Heart right ventricle (tissue), 16 donors: ENCODE measurements at regions of chr22 and their contacts with region 1.

Region 1: GRCh38 chr22:17830043-17830961 is 56.0 kb upstream of the BID start:
- DNase-seq: peak; percentile 83 to 85
- ATAC-seq: peak; percentile 62 to 88 (median 80)
- H3K4me3 ChIP-seq: peak overlapping the region in 1 of 10 donors; percentile 4
- H3K27ac ChIP-seq: peak overlapping the region in 8 of 10 donors; percentile 54 to 81 (median 72)
- H3K4me1 ChIP-seq: peaks cover 18 to 53% (median 41%) of the 10 kb centered on the region in 9 donors
- H3K27me3 ChIP-seq: no peaks in the 10 kb centered on the region
- CTCF ChIP-seq: peak; percentile 97 to 100 (median 100)

Region 2: GRCh38 chr22:17872471-17872870 is 42.2 kb after region 1 on chr22:
- intact Hi-C with region 1: loop called in 1 of 10 experiments (anchors 5 kb)
- DNase-seq: no peak
- ATAC-seq: no peak
- H3K4me3 ChIP-seq: no peak overlapping the region
- H3K27ac ChIP-seq: peak overlapping the region in 7 of 10 donors; percentile 11 to 73 (median 36)
- H3K4me1 ChIP-seq: peaks cover 2 to 45% (median 15%) of the 10 kb centered on the region in 9 donors
- H3K27me3 ChIP-seq: no peaks in the 10 kb centered on the region
- CTCF ChIP-seq: no peak

Region 3: GRCh38 chr22:18031695-18032454 is 201.6 kb after region 1 on chr22:
- intact Hi-C with region 1: loop called in 3 of 10 experiments (anchors 5 to 10 kb)
- DNase-seq: no peak
- ATAC-seq: peak in 7 of 8 donors; percentile 16 to 77 (median 48)
- H3K4me3 ChIP-seq: no peak overlapping the region
- H3K27ac ChIP-seq: peak overlapping the region in 4 of 10 donors; percentile 32 to 71 (median 52)
- H3K4me1 ChIP-seq: peaks cover 0 to 44% (median 20%) of the 10 kb centered on the region in 9 donors
- H3K27me3 ChIP-seq: peaks cover 0 to 16% (median 0%) of the 10 kb centered on the region in 7 donors
- CTCF ChIP-seq: no peak

Region 4: GRCh38 chr22:18070556-18071306 is 240.4 kb after region 1 on chr22:
- intact Hi-C with region 1: loop called in 4 of 10 experiments (anchors 1 to 5 kb)
- DNase-seq: no peak
- ATAC-seq: no peak
- H3K4me3 ChIP-seq: no peak overlapping the region
- H3K27ac ChIP-seq: no peak overlapping the region
- H3K4me1 ChIP-seq: peaks cover 0 to 38% (median 7%) of the 10 kb centered on the region in 9 donors
- H3K27me3 ChIP-seq: peaks cover 0 to 7% (median 0%) of the 10 kb centered on the region in 7 donors
- CTCF ChIP-seq: peak in 4 of 9 donors; percentile 9 to 23 (median 13)